Right ventricle myocardium inferior (tissue), 1 donor: ENCODE measurements at regions of chr6 and their contacts with region 1.

Region 1: GRCh38 chr6:32838114-32838958 is at the start of gene TAP2:
- DNase-seq: peak; percentile 98
- ATAC-seq: peak; percentile 97
- total RNA-seq, gene TAP2: 19.3 TPM

Region 2: DNA sequence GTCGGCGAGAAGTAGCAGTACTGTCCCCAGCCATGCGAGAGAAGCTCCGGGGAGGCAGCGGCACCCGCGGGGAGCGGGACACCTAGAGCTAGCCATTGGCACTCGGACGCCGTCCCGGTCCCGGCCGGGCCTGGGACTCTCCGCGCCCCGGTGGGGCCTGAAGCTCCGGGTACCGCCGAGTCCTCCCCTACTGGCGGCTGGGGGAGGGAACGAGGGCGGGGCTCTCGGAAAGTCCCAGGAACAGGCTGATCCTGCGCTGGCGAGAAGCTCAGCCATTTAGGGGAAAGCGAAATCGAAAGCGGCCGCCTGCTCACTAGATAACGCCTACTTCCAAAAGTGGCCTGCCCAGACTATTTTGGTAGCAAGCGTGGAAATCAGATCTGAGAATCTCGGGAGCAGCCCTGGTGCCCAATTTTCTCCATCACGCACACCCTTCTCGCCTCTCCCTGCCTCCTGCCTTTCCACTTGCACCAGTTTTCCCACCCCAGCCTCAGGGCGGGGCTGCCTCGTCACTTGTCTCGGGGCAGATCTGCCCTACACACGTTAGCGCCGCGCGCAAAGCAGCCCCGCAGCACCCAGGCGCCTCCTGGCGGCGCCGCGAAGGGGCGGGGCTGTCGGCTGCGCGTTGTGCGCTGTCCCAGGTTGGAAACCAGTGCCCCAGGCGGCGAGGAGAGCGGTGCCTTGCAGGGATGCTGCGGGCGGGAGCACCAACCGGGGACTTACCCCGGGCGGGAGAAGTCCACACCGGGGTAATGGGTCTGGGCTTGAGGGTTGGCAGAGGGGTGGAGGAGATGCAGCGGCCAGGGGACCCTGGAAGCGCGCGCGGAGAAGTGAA is 15.4 kb after region 1 on chr6 and contains the starts of genes PSMB9 and TAP1:
- intact Hi-C with region 1: loop called (anchors 1 kb)
- DNase-seq: peak; percentile 98
- ATAC-seq: peak; percentile 97
- total RNA-seq, gene PSMB9: 13.4 TPM
- total RNA-seq, gene TAP1: 19.1 TPM

Region 3: DNA sequence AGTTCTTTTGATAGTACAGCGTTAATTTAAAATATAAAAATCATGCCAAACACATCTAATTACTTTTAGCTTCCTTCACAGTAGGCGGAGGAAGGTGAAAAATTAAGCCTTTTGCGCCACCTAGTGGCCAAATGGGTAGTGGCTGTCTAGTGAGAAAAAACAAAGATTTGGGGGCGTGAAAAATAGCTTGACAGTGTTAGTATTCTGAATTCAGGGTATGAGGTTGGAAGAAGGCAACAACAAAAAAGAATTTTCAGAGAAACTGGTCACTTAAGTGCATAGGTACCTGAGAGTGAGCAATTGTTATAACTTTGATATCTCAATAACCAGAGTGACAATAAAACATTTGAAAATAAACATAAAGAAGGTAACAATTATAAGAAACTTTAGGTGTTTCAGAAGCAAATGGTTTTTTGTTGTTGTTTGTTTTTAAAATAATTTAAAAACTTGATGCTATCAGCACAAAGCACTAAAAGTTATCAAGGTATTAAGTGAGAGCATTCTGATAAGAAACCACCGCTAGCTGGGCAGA is 30.0 kb after region 1 on chr6:
- intact Hi-C with region 1: loop called (anchors 1 kb)
- DNase-seq: no peak
- ATAC-seq: peak; percentile 67